ENCODE measurements at regions of chr12 and their contacts with region 1.

Region 1: DNA sequence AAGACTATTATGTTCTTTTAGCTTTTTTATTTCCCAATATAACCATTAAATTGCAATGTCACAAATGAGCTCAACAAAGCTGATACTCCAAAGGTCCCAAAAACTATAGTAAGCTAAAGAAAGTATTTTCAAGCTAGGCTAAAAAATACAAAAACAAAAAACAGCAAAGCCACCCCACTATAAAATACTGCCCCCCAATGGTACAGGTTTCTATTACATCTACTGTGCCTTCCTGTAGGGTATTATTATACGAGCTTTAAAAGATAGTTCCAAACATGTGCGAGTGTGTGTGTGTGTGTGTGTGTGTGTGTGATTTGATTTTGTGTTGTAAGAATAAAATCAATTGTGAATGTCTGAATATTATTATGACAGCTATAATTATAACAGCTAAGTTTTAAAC is 1.1 kb downstream of the IFNG start:
- DNase-seq: no peak
- ATAC-seq: peak; percentile 57
- H3K4me3 Mint-ChIP-seq: no peak overlapping the region
- H3K27ac Mint-ChIP-seq: no peak overlapping the region
- H3K4me1 Mint-ChIP-seq: peaks cover 7% of the 10 kb centered on the region; the same call in 1 of the 2 replicates
- H3K27me3 Mint-ChIP-seq: no peaks in the 10 kb centered on the region
- CTCF ChIP-seq: peak; percentile 54; the same call in 1 of the 2 replicates

Region 2: GRCh38 chr12:67977668-67978067 is 180.8 kb before region 1 on chr12:
- CTCF ChIA-PET with region 1: no interaction called
- POLR2A ChIA-PET with region 1: no interaction called
- DNase-seq: no peak
- ATAC-seq: no peak
- H3K4me3 Mint-ChIP-seq: no peak overlapping the region
- H3K27ac Mint-ChIP-seq: no peak overlapping the region
- H3K4me1 Mint-ChIP-seq: no peaks in the 10 kb centered on the region
- H3K27me3 Mint-ChIP-seq: no peaks in the 10 kb centered on the region; the same call in 1 of the 2 replicates
- CTCF ChIP-seq: no peak

Region 3: GRCh38 chr12:68067762-68068376 is 90.6 kb before region 1 on chr12:
- CTCF ChIA-PET with region 1: interaction called, 12 read pairs
- POLR2A ChIA-PET with region 1: no interaction called
- DNase-seq: no peak
- ATAC-seq: peak; percentile 80
- H3K4me3 Mint-ChIP-seq: no peak overlapping the region
- H3K27ac Mint-ChIP-seq: no peak overlapping the region
- H3K4me1 Mint-ChIP-seq: no peaks in the 10 kb centered on the region
- H3K27me3 Mint-ChIP-seq: peaks cover 19% of the 10 kb centered on the region
- CTCF ChIP-seq: peak; percentile 57; the same call in 1 of the 2 replicates

Region 4: DNA sequence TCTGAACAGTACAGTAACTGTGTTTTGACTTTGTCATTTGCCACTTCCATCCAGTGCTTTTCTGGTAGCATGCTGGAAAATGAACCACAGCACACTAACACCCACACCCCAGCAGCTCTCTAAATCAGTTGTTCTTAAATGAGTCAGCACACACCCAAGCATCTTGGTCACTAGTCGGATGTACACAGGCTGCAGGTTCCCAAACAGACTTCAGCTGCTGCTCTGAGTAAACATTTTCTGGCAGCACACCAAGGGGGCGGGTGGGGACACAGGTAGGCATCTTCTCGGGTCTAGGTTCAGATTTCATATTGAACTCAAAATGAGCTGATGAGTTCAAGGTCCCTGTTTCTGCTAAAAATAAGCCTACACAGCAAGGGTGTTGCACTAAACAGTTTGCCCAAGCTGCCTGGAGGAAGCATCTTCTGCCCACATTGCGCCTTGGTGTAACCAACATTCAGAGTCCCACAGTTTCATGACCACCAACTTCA is 38.7 kb before region 1 on chr12:
- CTCF ChIA-PET with region 1: interaction called, 56 read pairs
- POLR2A ChIA-PET with region 1: no interaction called
- DNase-seq: no peak
- ATAC-seq: no peak
- H3K4me3 Mint-ChIP-seq: no peak overlapping the region
- H3K27ac Mint-ChIP-seq: no peak overlapping the region
- H3K4me1 Mint-ChIP-seq: peaks cover 16% of the 10 kb centered on the region
- H3K27me3 Mint-ChIP-seq: peaks cover 4% of the 10 kb centered on the region
- CTCF ChIP-seq: no peak

Region 5: GRCh38 chr12:68148258-68148951 is 10.0 kb before region 1 on chr12:
- CTCF ChIA-PET with region 1: interaction called, 15 read pairs
- POLR2A ChIA-PET with region 1: no interaction called
- DNase-seq: no peak
- ATAC-seq: peak; percentile 75
- H3K4me3 Mint-ChIP-seq: no peak overlapping the region
- H3K27ac Mint-ChIP-seq: no peak overlapping the region
- H3K4me1 Mint-ChIP-seq: peaks cover 20% of the 10 kb centered on the region
- H3K27me3 Mint-ChIP-seq: peaks cover 21% of the 10 kb centered on the region
- CTCF ChIP-seq: no peak

Region 6: GRCh38 chr12:68175557-68176061 is 17.2 kb after region 1 on chr12:
- CTCF ChIA-PET with region 1: interaction called, 12 read pairs
- POLR2A ChIA-PET with region 1: no interaction called
- DNase-seq: no peak
- ATAC-seq: peak; percentile 20; the same call in 1 of the 2 replicates
- H3K4me3 Mint-ChIP-seq: no peak overlapping the region
- H3K27ac Mint-ChIP-seq: no peak overlapping the region
- H3K4me1 Mint-ChIP-seq: peaks cover 11% of the 10 kb centered on the region
- H3K27me3 Mint-ChIP-seq: no peaks in the 10 kb centered on the region
- CTCF ChIP-seq: no peak

Region 7: GRCh38 chr12:68259318-68259940 is 101.0 kb after region 1 on chr12:
- CTCF ChIA-PET with region 1: no interaction called
- POLR2A ChIA-PET with region 1: no interaction called
- DNase-seq: no peak
- ATAC-seq: no peak; the same call in 1 of the 2 replicates
- H3K4me3 Mint-ChIP-seq: no peak overlapping the region
- H3K27ac Mint-ChIP-seq: no peak overlapping the region
- H3K4me1 Mint-ChIP-seq: peaks cover 17% of the 10 kb centered on the region
- H3K27me3 Mint-ChIP-seq: no peaks in the 10 kb centered on the region
- CTCF ChIP-seq: no peak